ENCODE measurements at regions of chr14 and their contacts with region 1.

Region 1: GRCh38 chr14:75088574-75089373 is 19.3 kb downstream of the ZC2HC1C start:
- DNase-seq: peak; percentile 34
- H3K4me3 ChIP-seq: no peak overlapping the region
- H3K27ac ChIP-seq: no peak overlapping the region
- H3K27me3 ChIP-seq: no peaks in the 10 kb centered on the region
- CTCF ChIP-seq: peak; percentile 93

Region 2: GRCh38 chr14:74905375-74906142 is 183.2 kb before region 1 on chr14:
- CTCF ChIA-PET with region 1: interaction called, 44 read pairs
- POLR2A ChIA-PET with region 1: no interaction called
- DNase-seq: no peak
- H3K4me3 ChIP-seq: no peak overlapping the region
- H3K27ac ChIP-seq: no peak overlapping the region
- H3K27me3 ChIP-seq: no peaks in the 10 kb centered on the region
- CTCF ChIP-seq: peak; percentile 96

Region 3: DNA sequence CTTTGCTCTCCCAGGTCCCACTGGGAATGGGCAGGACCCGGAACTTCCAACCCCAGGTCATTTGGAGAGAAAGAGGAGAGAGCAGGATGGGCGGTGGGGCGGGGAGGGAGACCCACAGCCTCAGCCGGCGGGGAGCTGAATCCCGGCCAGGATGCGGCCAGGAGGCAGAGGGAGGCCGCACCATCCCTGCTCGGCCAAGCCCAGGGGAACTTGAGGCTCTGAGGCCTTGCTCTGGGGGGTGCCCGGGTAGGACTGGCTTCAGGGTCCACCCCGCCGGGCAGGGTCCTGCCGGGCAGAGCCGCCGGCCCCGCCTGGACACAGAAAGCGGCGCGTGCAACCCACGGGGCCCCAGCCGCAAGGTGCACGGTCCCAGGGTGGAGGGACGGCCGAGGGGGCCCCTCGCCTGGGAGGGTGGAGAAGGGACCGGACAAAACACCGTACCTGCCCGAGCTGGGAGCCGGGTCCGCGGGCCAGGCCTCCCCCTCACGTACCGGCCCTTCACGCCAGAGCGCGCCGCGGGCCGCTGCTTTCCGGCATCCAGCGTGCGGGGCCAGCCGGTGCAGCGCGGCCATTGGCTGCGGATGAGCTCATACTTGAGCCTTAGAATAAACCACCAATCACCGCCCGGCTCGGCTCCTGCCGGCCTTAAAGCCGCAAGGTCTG is 165.9 kb before region 1 on chr14 and contains the start of gene RPS6KL1:
- CTCF ChIA-PET with region 1: interaction called, 25 read pairs
- POLR2A ChIA-PET with region 1: no interaction called
- DNase-seq: peak; percentile 39
- H3K4me3 ChIP-seq: peak within 1 kb of the TSS; percentile 55
- H3K27ac ChIP-seq: no peak within 1 kb of the TSS
- H3K27me3 ChIP-seq: peaks cover 2% of the 10 kb centered on the region
- CTCF ChIP-seq: no peak
- polyA plus RNA-seq, gene RPS6KL1: 0.37 and 0.64 TPM in 2 replicates

Region 4: DNA sequence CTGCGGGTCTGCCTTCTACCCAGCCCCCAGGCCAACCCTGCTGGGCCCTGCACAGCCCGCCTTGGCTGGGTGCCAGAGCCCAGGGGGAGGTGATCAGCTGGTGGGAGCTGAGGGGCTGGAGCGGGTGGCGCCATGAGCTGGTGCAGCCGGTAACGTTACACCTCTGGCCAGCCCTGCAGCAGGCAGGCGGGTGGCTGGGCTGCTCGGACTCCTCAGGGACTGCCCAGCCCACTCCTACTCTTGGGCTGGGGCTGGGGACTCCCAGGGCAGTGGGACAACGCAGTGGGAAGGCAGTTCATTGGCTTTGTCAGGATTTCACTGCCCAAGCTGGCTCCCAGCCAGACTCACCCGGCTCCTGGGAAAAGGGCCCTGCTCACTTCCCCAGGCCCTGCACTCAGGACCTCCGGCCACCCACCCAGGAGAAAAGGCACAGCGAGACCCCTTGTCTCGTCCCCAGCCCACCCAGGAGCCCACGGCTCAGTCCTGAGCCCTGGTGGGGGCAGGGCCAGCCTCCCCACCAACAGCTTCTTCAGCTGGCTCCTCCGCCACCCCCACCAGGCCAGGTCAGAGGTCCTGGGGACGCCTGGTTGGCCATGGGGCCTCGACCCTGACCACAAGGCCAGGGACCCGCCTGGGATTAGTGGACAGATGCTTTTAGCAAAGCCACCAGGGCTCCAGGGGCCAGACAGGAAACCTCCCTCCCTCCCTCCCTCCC is 134.4 kb before region 1 on chr14:
- CTCF ChIA-PET with region 1: interaction called, 21 read pairs
- POLR2A ChIA-PET with region 1: no interaction called
- DNase-seq: no peak
- H3K4me3 ChIP-seq: peak overlapping the region; percentile 13
- H3K27ac ChIP-seq: no peak overlapping the region
- H3K27me3 ChIP-seq: peaks cover 16% of the 10 kb centered on the region
- CTCF ChIP-seq: no peak

Region 5: DNA sequence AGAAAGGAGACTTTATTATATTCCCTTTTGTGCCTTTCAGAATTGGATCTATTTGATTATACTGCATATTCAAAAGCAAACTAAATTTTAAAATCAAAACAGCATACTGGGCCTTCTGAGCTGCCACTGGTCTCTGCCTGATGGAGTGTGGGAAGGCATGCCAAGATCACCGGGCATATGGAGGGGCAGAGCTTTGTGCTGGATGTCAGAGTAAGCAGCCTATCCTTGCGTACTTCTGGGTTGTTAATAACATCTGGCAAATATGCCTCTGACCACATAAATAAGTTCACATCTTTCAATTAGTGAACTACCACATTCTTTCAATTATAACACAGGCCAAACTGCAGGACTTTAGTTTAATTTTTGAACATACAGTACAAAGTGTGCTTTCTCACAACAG is 55.8 kb before region 1 on chr14:
- CTCF ChIA-PET with region 1: no interaction called
- POLR2A ChIA-PET with region 1: no interaction called
- DNase-seq: no peak
- H3K4me3 ChIP-seq: no peak overlapping the region
- H3K27ac ChIP-seq: no peak overlapping the region
- H3K27me3 ChIP-seq: no peaks in the 10 kb centered on the region
- CTCF ChIP-seq: no peak

Region 6: GRCh38 chr14:75049731-75050201 is 39.0 kb before region 1 on chr14:
- CTCF ChIA-PET with region 1: interaction called, 11 read pairs
- POLR2A ChIA-PET with region 1: no interaction called
- DNase-seq: no peak
- H3K4me3 ChIP-seq: no peak overlapping the region
- H3K27ac ChIP-seq: no peak overlapping the region
- H3K27me3 ChIP-seq: no peaks in the 10 kb centered on the region
- CTCF ChIP-seq: no peak